Right ventricle myocardium inferior (tissue), 1 donor: ENCODE measurements at regions of chr2 and their contacts with region 1.

Region 1: DNA sequence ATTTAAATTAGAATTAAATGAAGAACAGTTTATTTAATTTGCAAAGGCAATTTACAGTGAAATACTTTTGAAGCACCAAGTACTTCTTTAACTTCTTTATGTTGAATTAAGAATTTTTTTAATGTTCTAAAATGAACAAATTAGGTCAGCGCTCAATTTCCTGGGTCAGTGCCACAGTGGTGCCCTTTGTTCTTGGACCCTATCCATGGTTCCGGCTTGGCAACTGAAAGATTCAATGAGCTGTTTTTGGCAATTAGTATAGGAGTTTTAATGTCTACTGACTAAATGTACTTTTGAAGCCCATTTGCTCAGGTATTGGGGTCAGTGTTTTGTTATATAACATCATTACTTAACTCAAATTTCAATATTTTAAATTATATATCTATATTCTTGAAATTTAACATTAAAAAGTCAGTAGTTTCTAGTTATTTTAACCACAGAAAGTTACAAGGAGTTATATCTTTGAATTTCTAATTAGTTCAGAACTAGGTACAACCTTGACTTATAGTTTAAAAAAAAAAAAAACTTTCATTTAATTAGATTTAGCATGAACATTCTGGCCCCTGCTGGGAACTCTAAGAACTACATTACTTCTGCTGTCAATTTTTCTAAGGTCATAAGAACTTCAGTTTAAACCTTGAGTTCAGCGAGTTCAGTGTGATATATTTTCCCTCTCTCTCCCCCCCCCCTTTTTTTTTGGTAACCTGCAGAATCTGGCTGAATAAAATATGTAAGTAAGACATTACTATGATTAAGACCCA is 7.6 kb upstream of the MSTN start:
- DNase-seq: no peak
- ATAC-seq: no peak

Region 2: DNA sequence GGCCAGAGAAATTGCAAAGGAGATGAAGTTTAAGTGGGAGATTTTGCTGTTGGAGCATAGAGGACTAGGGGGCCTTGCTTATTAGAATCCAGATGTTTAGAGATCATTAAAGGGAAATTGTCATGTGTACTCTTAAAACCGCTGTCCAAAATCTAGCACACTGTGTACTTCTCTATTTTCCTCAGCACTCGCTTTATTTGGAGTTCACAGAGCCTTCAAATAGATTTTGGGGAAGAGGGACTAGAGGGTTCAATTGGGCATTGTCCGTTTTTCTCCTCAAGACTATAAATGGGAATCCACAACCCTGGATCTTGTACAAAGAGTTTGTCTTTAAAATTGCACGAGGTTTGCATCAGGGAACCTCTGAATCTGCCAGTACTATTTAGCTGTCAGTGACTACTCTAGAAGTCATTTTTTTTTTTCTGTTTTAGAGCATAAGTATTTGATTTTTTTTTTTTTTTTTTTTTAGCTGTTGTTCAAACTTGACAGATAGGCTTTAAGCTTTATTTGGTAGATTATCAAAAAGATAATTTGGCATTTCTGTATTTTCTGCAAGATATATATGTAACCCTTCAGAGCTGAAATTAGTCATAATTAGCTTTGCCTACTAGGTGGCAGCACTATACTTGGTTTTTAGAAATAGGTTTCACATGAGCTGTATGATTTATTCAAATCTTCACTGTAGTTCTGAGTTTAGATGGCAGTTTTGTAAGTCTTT is 271.6 kb before region 1 on chr2:
- intact Hi-C with region 1: loop called (anchors 10 kb)
- DNase-seq: no peak
- ATAC-seq: peak; percentile 59

Region 3: DNA sequence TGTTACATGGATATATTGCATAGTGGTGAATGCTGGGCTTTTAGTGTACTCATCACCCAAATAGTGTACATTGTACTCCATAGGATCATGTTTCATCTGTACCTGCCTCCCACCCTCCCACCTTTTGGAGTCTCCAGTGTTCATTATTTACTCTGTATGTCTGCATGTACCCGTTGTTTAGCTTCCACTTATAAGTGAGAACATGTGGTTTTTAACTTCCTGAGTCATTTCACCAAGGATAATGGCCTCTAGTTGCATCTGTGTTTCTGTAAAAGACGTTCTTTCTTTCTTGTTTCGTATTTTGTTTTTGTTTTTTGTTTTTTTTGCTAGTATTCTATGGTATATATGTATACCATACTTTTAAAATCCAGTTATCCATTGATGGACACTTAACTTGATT is 115.1 kb before region 1 on chr2:
- intact Hi-C with region 1: no loop called
- DNase-seq: no peak
- ATAC-seq: no peak